ENCODE measurements at regions of chr6 and their contacts with region 1.

Region 1: DNA sequence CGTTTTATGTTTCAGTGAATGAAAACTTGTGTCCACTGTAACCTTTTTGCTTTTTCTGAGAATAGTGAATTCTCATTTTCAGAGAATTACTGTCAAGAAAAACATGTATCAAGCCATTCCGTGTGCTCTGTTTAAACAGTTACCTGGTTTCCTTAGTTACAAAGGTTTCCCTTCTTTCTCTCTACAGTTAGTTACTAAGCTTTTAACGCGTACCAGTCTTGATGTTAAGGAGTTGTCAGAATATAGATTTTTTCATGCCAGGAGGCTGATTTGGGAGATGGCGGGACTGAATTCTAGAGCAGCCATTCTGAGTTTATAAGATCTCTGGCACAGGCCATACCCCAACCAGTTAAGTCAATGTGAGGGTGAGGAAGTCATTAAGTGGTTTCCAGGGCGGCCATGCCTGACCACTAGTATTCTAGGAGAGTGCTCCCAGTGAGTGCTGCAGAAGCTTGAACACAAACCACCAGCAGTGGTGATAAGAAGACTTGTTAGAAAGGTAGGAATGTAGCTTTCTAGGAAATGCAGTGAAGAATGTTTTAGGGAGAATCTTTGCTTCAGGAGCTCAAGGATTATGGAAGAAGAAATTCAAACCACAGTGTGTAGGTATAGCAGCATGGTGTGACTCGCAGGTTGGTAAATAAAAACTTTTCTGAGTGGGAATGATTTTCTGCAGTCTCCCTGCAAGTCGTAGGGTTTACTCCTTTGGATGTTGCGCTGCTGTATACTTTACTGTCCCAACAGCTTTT is 112.9 kb downstream of the JARID2 start:
- DNase-seq: peak in 1 of 4 experiments; percentile 70
- ATAC-seq: peak; percentile 68
- H3K4me3 ChIP-seq: no peak overlapping the region
- H3K27ac ChIP-seq: peak overlapping the region; percentile 3; the same call in 1 of the 3 replicates
- H3K4me1 ChIP-seq: peaks cover 21 to 52% of the 10 kb centered on the region in 2 experiments
- H3K27me3 ChIP-seq: no peaks in the 10 kb centered on the region
- CTCF ChIP-seq: no peak
- EP300 ChIP-seq: no peak
- POLR2A ChIP-seq: no peak
- RAD21 ChIP-seq: no peak

Region 2: DNA sequence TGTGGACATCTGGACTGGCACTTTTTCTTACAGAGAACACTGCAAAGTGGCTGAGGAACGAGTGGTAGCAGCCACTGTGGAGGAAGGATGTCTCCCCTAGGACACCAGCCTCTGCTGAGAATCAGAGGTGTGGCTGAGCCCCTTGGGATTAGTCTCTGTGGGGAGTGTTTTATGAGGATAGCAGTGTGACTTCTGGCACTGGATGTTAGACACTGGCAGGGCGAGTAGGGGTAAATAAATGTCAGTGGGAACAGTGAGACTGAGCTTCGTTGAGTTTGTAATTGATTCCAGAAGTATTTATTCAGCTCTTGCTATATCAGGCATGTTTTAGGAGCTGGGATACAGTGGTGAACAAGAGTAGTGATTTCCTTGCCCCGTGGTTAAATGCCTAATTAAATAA is 11.1 kb after region 1 on chr6:
- CTCF ChIA-PET with region 1: no interaction called
- POLR2A ChIA-PET with region 1: interaction called, 12 read pairs
- in situ Hi-C with region 1: no loop called
- intact Hi-C with region 1: no loop called
- DNase-seq: no peak
- ATAC-seq: peak; percentile 50
- H3K4me3 ChIP-seq: no peak overlapping the region
- H3K27ac ChIP-seq: no peak overlapping the region; the same call in 2 of the 3 replicates
- H3K4me1 ChIP-seq: peaks cover 9 to 53% of the 10 kb centered on the region in 2 experiments; a peak in 4 of 5 replicates
- H3K27me3 ChIP-seq: no peaks in the 10 kb centered on the region
- CTCF ChIP-seq: no peak
- EP300 ChIP-seq: no peak
- POLR2A ChIP-seq: no peak
- RAD21 ChIP-seq: no peak

Measured in K562 (cell line).